ENCODE measurements at regions of chr1 and their contacts with region 1.

Region 1: GRCh38 chr1:41268154-41268770 is 26.2 kb upstream of the SCMH1 start:
- DNase-seq: peak; percentile 84
- ATAC-seq: peak; percentile 90 to 91
- H3K4me3 ChIP-seq: no peak overlapping the region
- H3K27ac ChIP-seq: no peak overlapping the region
- H3K4me1 ChIP-seq: no peaks in the 10 kb centered on the region
- H3K27me3 ChIP-seq: no peaks in the 10 kb centered on the region
- CTCF ChIP-seq: peak; percentile 98

Region 2: GRCh38 chr1:41416552-41417334 is 148.5 kb after region 1 on chr1:
- intact Hi-C with region 1: loop called (anchors 10 kb)
- DNase-seq: peak; percentile 71
- ATAC-seq: peak; percentile 82 to 83
- H3K4me3 ChIP-seq: no peak overlapping the region
- H3K27ac ChIP-seq: no peak overlapping the region
- H3K4me1 ChIP-seq: peaks cover 15% of the 10 kb centered on the region
- H3K27me3 ChIP-seq: no peaks in the 10 kb centered on the region
- CTCF ChIP-seq: peak; percentile 91

Measured in lower lobe of right lung (tissue), 2 donors.